Caco-2 (cell line): ENCODE measurements at regions of chr6 and their contacts with region 1.

Region 1: GRCh38 chr6:161694995-161695394 is 421.1 kb upstream of the AGPAT4 start:
- DNase-seq: no peak
- H3K4me3 ChIP-seq: no peak overlapping the region
- H3K4me3 Mint-ChIP-seq: no peak overlapping the region
- H3K27ac Mint-ChIP-seq: no peak overlapping the region
- H3K4me1 ChIP-seq: no peaks in the 10 kb centered on the region
- H3K4me1 Mint-ChIP-seq: no peaks in the 10 kb centered on the region
- H3K27me3 ChIP-seq: no peaks in the 10 kb centered on the region
- H3K27me3 Mint-ChIP-seq: peaks cover 6% of the 10 kb centered on the region
- CTCF ChIP-seq: peak in 1 of 2 experiments; percentile 38

Region 2: GRCh38 chr6:161393839-161394364 is 301.1 kb before region 1 on chr6:
- CTCF ChIA-PET with region 1: interaction called, 3 read pairs
- POLR2A ChIA-PET with region 1: no interaction called
- intact Hi-C with region 1: loop called (anchors 1 kb)
- DNase-seq: peak in 1 of 2 experiments; percentile 55
- H3K4me3 ChIP-seq: no peak overlapping the region
- H3K4me3 Mint-ChIP-seq: no peak overlapping the region
- H3K27ac Mint-ChIP-seq: no peak overlapping the region
- H3K4me1 ChIP-seq: no peaks in the 10 kb centered on the region
- H3K4me1 Mint-ChIP-seq: no peaks in the 10 kb centered on the region
- H3K27me3 ChIP-seq: no peaks in the 10 kb centered on the region
- H3K27me3 Mint-ChIP-seq: peaks cover 8% of the 10 kb centered on the region
- CTCF ChIP-seq: peak; percentile 50 to 67

Region 3: DNA sequence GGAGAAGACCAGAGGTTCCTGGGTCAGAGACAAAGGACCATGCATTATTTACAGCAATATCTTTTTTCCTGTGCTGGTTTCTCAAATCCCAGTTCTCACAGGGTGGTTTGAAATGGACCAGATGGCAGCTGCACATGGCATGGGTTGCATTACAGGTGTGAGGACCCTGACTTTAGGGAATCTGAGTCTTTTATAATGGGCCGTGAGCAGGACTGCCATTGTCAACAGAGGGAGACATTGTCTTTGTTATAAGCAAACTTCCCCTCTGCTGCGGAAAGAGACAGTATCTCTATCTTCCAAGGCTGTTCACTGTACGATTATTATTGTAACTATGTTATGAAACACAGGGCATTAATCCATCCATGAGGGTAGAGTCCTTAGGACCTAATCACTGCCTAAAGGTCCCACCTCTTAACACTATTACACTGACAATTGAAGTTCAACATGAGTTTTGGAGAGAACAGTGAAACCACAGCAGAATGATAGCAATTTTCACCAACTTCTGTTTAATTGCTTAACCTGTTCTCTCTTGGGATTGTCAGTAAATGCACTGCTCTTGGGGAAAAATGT is 265.0 kb before region 1 on chr6:
- CTCF ChIA-PET with region 1: no interaction called
- POLR2A ChIA-PET with region 1: no interaction called
- intact Hi-C with region 1: loop called (anchors 1 kb)
- DNase-seq: peak in 1 of 2 experiments; percentile 13
- H3K4me3 ChIP-seq: no peak overlapping the region
- H3K4me3 Mint-ChIP-seq: no peak overlapping the region
- H3K27ac Mint-ChIP-seq: no peak overlapping the region
- H3K4me1 ChIP-seq: peaks cover 12% of the 10 kb centered on the region
- H3K4me1 Mint-ChIP-seq: peaks cover 7% of the 10 kb centered on the region
- H3K27me3 ChIP-seq: no peaks in the 10 kb centered on the region
- H3K27me3 Mint-ChIP-seq: no peaks in the 10 kb centered on the region
- CTCF ChIP-seq: peak; percentile 26 to 27

Region 4: GRCh38 chr6:161618831-161619454 is 76.1 kb before region 1 on chr6:
- CTCF ChIA-PET with region 1: no interaction called
- POLR2A ChIA-PET with region 1: no interaction called
- intact Hi-C with region 1: loop called (anchors 1 kb)
- DNase-seq: peak; percentile 51 to 56
- H3K4me3 ChIP-seq: no peak overlapping the region
- H3K4me3 Mint-ChIP-seq: no peak overlapping the region
- H3K27ac Mint-ChIP-seq: no peak overlapping the region
- H3K4me1 ChIP-seq: no peaks in the 10 kb centered on the region
- H3K4me1 Mint-ChIP-seq: no peaks in the 10 kb centered on the region
- H3K27me3 ChIP-seq: no peaks in the 10 kb centered on the region
- H3K27me3 Mint-ChIP-seq: peaks cover 18% of the 10 kb centered on the region
- CTCF ChIP-seq: peak; percentile 22 to 43

Region 5: GRCh38 chr6:161660666-161661571 is 34.1 kb before region 1 on chr6:
- CTCF ChIA-PET with region 1: no interaction called
- POLR2A ChIA-PET with region 1: no interaction called
- intact Hi-C with region 1: no loop called
- DNase-seq: no peak
- H3K4me3 ChIP-seq: no peak overlapping the region
- H3K4me3 Mint-ChIP-seq: no peak overlapping the region
- H3K27ac Mint-ChIP-seq: no peak overlapping the region
- H3K4me1 ChIP-seq: no peaks in the 10 kb centered on the region
- H3K4me1 Mint-ChIP-seq: no peaks in the 10 kb centered on the region
- H3K27me3 ChIP-seq: no peaks in the 10 kb centered on the region; the same call in 1 of the 2 replicates
- H3K27me3 Mint-ChIP-seq: peaks cover 21% of the 10 kb centered on the region
- CTCF ChIP-seq: no peak